KBM-7 (cell line): ENCODE measurements at regions of chr10 and their contacts with region 1.

Region 1: DNA sequence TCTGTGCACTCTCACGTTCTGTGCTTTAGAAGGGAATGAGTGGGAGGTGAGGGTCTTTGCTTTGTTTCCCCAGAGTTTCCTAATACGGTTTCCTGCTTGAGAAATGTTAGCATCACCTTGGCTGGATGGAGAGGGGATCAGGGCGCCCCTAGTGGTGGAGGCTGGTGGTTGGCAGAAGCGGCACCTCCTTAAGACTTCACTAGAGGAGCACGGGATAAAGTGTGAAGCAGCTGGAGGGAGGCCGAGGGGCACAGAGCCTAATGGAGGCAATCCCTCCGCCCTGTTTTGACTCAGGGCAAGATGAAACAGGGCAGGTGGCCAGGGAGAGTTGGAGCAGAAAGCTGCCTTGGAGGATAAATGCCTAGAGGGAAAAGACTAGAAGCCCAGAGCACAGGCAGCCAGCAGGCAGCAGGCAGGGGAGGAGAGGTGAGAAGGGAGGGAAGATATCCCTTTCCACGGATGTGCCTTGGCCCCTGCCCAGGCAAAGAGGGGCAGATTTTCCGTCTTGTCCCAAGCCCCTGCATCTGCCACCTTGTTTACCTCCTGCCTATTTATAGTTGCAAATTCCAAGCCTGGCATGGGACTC is 56.0 kb upstream of the BTRC start:
- DNase-seq: peak; percentile 80

Region 2: DNA sequence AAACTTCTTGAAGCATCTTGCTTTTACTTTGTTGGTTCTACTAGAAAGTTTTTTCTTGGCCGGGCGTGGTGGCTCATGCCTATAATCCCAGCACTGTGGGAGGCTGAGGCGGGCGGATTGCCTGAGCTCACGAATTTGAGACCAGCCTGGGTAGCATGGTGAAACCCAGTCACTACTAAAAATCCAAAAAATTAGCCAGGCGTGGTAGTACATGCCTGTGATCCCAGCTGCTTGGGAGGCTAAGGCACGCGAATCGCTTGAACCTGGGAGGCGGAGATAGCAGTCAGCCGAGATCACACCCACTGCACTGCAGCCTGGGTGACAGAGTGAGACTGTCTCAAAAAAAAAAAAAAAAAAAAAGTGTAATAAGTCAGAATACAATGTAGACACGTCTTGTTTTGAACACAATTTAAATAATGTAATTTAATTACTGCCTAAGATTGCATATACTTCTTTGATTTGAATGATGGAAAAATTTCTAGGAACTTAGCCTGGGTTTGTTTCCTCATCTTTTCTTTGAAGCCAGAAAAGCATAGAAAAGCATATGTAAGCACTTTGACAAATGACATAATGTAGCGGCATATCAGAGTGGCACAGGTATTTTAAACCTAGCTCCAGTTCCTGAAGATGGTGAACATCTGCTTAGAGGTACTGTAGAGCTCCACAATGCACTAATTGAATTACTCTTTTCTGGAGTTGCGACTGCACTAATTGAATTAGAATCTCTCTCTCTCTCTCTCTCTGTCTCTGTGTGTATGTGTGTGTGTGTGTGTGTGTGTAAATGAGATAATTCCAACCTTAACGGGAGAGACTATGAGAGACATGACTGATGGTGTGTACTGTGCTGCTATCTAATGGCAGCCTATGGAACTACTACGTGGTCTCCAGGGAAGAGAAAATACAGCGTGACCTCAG is 143.8 kb after region 1 on chr10:
- in situ Hi-C with region 1: loop called (anchors 25 kb)
- DNase-seq: peak; percentile 83

Region 3: GRCh38 chr10:101569838-101570766 is 272.1 kb after region 1 on chr10:
- in situ Hi-C with region 1: loop called (anchors 25 kb)
- DNase-seq: peak; percentile 82

Region 4: DNA sequence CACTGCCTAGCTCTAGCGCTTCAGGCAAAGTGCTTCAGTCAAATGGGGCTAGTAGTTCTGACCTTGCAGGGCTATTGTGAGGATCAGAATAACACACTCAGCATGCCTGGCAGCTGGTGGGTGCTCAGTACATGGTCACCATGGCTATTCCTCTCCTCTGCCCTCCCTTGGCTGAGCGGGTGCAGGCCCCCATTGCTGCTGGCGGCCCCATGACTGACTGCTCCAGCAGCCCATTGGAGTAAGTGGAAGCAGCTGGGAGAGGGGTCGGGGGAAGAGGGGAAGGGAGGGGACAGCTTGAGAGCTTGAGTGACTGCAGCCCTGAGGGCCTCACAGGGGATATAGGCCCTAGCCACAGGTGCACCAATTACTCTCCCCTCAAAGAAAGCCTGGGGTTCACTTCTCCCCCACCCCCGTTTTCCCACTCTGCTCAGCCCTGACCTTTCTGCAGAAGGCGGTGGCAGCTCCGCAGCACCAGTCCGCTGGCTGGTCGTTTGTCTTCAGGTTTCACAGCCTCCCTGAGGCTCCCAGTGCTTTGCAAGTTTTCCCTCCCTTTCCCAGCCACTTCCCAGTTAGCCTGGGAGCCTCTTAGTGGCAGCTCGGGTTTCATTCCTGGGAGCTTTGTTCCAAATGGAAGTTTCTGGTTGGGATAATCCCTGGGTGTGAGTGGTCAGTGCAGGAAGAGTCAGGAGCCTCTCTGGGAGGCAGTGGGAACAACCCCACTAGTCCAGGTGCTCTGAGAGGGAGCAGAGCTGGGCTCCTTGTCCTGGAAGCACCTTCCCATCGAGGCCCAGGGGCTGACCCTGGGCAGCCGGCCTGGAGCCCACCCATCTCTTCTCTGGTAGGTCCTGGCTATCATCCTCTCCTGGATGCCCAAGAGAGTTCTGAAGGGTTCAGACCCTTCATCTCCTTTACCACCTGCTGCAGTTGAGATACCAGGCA is 461.6 kb after region 1 on chr10:
- in situ Hi-C with region 1: no loop called
- DNase-seq: no peak